BJ (cell line): ENCODE measurements at regions of chr17 and their contacts with region 1.

Region 1: DNA sequence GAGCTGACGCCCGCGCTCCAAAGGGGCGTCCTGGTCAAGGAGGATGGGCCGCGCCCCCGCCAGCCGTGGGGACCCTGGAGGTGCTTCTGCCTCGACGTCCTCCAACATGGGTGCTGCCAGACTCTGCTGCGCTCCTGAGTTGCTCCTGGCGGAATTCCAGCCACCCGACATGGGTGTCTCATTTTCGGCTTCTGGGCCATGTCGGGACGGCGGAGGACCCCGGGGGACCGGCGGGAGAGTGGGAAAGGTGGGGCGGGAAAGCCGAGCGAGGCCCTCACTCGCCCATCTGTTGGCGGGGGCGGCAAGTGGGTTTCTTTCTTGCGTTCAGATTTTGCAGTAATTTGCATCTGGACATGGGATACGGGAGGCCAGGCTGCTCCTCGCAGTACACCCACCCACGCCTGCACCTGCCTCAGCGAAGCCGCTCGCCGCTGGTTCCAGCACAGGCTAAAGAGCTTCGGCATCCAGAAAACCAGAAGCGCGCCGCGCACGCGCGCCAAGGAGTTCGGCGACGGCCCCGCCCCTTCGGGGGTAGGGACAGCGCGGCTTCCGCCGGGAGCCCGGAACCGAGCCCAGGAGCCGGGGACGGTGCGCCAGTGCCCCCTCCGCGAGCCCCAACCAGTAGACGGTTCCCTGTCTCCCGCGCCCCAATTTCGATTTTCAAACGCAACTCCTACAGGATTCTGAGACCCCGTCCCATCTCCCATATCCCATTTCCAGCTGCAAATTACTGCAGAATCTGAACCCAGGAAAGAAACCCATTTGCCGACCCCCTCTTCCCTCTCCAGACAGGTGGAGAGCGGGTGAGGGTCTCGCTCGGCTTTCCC is at the start of gene ARMC7:
- DNase-seq: peak; percentile 38
- H3K4me3 ChIP-seq: peak within 1 kb of the TSS; percentile 90
- H3K27me3 ChIP-seq: no peaks in the 10 kb centered on the region
- CTCF ChIP-seq: no peak
- polyA plus RNA-seq, gene ARMC7: 5.7 and 6.9 TPM in 2 replicates

Region 2: DNA sequence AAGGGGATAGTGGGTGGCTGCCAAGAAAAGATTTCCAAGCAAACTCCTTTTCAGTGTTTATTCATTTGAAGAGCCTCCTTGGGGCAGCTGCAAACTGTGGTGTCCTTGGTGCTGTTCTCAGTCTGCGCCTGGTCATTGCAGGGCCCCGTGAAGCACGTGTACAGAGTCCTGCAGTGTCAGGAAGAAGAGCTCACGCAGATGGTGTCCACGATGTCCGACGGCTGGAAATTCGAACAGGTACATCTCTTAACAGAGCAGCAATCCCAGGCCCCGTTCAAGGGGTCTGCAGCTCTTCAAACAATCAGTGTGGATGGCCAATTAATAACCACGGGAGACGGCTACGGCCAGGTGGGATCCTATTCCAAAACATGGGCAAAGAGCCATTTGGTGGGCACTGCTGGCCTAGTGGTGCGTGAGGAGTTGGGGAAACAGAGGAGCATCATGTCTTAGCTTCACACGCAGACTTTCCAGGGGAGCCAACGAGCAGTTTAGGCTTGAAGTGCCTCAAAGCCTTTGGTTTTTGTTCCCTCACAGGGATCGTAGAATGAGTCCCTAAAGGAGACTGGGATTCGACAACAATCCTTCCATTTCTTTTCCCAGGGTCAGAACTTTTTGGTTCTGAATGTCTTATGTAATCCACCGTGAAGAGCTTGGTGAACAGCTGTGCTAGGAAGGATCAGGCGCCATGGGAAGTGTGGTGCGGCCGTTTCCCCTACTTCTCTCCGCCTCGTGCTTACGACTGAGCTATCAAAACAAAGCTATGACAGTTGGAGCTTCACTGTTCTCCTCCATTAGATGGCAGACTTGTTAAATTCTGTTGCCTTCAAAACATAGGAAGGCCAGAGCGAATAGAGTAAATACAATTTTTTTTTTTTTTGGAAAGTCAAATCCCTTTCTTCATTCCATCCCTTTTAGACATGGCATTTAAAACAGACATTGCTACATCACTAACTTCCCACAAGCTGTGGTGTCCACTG is 50.0 kb before region 1 on chr17:
- CTCF ChIA-PET with region 1: interaction called, 35 read pairs
- POLR2A ChIA-PET with region 1: no interaction called
- DNase-seq: peak; percentile 65
- H3K4me3 ChIP-seq: no peak overlapping the region
- H3K27me3 ChIP-seq: no peaks in the 10 kb centered on the region
- CTCF ChIP-seq: peak; percentile 60

Region 3: GRCh38 chr17:75096082-75096625 is 13.5 kb before region 1 on chr17:
- CTCF ChIA-PET with region 1: interaction called, 24 read pairs
- POLR2A ChIA-PET with region 1: no interaction called
- DNase-seq: no peak
- H3K4me3 ChIP-seq: no peak overlapping the region
- H3K27me3 ChIP-seq: no peaks in the 10 kb centered on the region
- CTCF ChIP-seq: no peak

Region 4: GRCh38 chr17:75144816-75145512 is 35.3 kb after region 1 on chr17:
- CTCF ChIA-PET with region 1: interaction called, 10 read pairs
- POLR2A ChIA-PET with region 1: no interaction called
- DNase-seq: no peak
- H3K4me3 ChIP-seq: no peak overlapping the region
- H3K27me3 ChIP-seq: no peaks in the 10 kb centered on the region
- CTCF ChIP-seq: no peak

Region 5: GRCh38 chr17:75199886-75200618 is 90.4 kb after region 1 on chr17:
- CTCF ChIA-PET with region 1: interaction called, 77 read pairs
- POLR2A ChIA-PET with region 1: no interaction called
- DNase-seq: no peak
- H3K4me3 ChIP-seq: no peak overlapping the region
- H3K27me3 ChIP-seq: no peaks in the 10 kb centered on the region
- CTCF ChIP-seq: no peak